ENCODE measurements at regions of chr7 and their contacts with region 1.

Region 1: GRCh38 chr7:55415173-55415778 is 50.1 kb downstream of the LANCL2 start:
- DNase-seq: peak; percentile 76 to 89 (median 85)
- ATAC-seq: peak; percentile 79 to 86
- H3K4me3 ChIP-seq: no peak overlapping the region
- H3K27ac ChIP-seq: no peak overlapping the region
- H3K4me1 ChIP-seq: no peaks in the 10 kb centered on the region
- H3K27me3 ChIP-seq: no peaks in the 10 kb centered on the region

Region 2: DNA sequence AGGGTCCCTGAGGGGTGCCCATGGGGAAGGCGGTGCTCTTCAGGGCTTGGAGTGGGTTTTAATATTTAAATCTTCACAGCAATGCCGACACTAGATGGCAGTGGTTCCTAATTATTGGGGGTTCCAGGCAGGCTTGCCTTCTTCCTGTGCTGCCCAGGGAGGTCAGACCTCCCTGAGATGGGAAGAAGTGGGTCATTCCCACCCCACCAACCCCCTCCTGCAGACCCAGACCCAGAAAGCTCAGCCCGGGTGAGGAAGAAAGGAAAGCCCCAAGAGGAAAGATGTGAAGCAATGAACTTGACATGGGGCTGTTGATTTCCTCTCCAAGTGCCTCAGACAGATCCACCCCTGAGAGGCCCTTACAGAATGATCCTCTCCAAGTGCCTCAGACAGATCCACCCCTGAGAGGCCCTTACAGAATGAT is 135.2 kb before region 1 on chr7:
- intact Hi-C with region 1: loop called (anchors 2 kb)
- DNase-seq: peak in 2 of 3 donors; percentile 43 to 57
- ATAC-seq: peak; percentile 81 to 88
- H3K4me3 ChIP-seq: no peak overlapping the region
- H3K27ac ChIP-seq: no peak overlapping the region
- H3K4me1 ChIP-seq: no peaks in the 10 kb centered on the region
- H3K27me3 ChIP-seq: no peaks in the 10 kb centered on the region